Right lobe of liver (tissue), 6 donors: ENCODE measurements at regions of chr15 and their contacts with region 1.

Region 1: DNA sequence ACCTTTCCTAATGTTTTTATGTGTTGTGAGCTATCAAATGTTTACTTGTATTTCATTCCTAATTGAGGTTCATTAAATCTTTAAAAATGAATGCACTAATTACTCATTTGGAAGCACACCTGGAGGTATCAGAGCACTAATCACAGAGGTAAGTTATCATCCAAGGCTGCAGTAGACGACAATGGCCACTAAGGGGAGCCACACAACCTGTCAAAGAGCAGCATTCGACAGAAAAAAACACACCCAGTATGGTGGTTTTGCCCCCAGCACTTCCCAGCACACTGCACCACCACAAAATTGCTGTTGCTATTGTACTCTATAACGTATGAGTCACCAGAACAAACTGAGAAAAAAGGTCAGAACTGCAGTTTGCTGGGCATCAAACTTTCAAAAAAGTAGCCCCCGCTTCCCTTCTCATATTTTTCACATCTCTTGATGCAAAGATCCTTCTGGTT is 205.9 kb upstream of the IGF1R start:
- DNase-seq: no peak
- ATAC-seq: peak; percentile 71 to 92 (median 76)
- H3K4me3 ChIP-seq: no peak overlapping the region
- H3K27ac ChIP-seq: no peak overlapping the region
- H3K4me1 ChIP-seq: no peaks in the 10 kb centered on the region
- H3K27me3 ChIP-seq: no peaks in the 10 kb centered on the region
- CTCF ChIP-seq: peak; percentile 67 to 80 (median 76)
- POLR2A ChIP-seq: no peak

Region 2: GRCh38 chr15:98266295-98266694 is 176.1 kb before region 1 on chr15:
- intact Hi-C with region 1: no loop called
- DNase-seq: no peak
- ATAC-seq: no peak
- H3K4me3 ChIP-seq: no peak overlapping the region
- H3K27ac ChIP-seq: no peak overlapping the region
- H3K4me1 ChIP-seq: no peaks in the 10 kb centered on the region
- H3K27me3 ChIP-seq: no peaks in the 10 kb centered on the region
- CTCF ChIP-seq: no peak
- POLR2A ChIP-seq: no peak

Region 3: DNA sequence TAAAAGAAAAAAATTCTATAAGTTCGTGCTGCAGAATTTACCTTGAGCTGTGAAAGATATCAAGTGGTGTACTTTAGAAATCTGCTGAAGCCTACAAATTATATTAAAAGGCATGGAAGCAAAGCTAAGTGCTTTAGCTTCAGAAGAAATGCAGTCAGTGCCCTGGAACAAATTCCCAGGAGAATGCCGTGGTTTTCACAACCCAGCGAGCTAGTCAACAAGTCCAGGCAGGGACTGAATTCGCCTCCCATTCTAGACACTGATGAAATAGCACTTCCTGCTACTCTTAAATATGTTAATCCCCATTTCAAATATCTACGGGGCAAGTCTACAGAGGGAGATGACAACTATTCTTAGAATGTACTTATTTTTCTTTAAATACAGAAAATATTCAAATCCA is 120.5 kb before region 1 on chr15:
- intact Hi-C with region 1: no loop called
- DNase-seq: no peak
- ATAC-seq: no peak
- H3K4me3 ChIP-seq: no peak overlapping the region
- H3K27ac ChIP-seq: no peak overlapping the region
- H3K4me1 ChIP-seq: no peaks in the 10 kb centered on the region
- H3K27me3 ChIP-seq: no peaks in the 10 kb centered on the region
- CTCF ChIP-seq: no peak
- POLR2A ChIP-seq: no peak

Region 4: GRCh38 chr15:98503970-98504369 is 61.6 kb after region 1 on chr15:
- intact Hi-C with region 1: loop called in 1 of 2 experiments (anchors 10 kb)
- DNase-seq: no peak
- ATAC-seq: no peak
- H3K4me3 ChIP-seq: no peak overlapping the region
- H3K27ac ChIP-seq: no peak overlapping the region
- H3K4me1 ChIP-seq: no peaks in the 10 kb centered on the region
- H3K27me3 ChIP-seq: no peaks in the 10 kb centered on the region
- CTCF ChIP-seq: no peak
- POLR2A ChIP-seq: no peak

Region 5: DNA sequence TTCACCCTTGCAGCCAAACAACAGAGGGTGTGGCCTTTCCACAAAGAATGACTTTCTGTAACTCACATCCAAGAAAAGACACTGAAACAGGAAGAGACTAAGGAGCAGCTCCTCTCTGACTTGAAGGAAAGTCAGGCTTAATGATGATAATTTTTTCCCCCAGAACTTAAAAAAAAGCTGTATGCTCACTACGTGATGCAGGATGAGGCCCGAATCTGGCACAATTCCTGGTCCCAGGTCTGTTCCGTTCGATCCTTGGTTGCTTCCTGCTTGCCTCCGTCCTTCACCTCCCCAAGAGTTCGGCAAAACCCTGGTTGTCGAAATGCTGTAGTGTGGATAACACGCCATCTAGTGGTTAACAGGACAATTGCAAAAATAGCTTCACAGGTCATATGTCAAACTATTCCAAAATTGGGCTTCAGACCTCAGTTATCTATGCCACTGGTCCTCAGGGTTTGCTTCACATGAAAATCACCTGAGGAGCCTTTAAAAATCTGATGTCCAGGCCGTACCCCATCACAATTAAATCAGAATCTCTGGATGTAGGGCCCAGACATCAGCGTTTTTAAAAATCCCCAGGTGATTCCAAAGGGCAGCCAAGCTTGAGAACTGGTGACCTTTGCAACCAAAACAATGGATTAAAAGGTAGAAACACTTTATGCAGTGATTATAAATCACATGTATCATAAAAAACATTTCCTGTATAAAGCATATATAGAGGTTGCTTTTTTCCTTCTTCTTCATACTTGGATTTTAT is 634.3 kb after region 1 on chr15:
- intact Hi-C with region 1: loop called in 1 of 2 experiments (anchors 10 kb)
- DNase-seq: peak in 2 of 3 donors; percentile 56 to 63
- ATAC-seq: peak; percentile 94 to 99 (median 97)
- H3K4me3 ChIP-seq: peak overlapping the region in 1 of 3 donors; percentile 20
- H3K27ac ChIP-seq: no peak overlapping the region
- H3K4me1 ChIP-seq: no peaks in the 10 kb centered on the region
- H3K27me3 ChIP-seq: no peaks in the 10 kb centered on the region
- CTCF ChIP-seq: peak; percentile 84 to 91 (median 89)
- POLR2A ChIP-seq: no peak